Activated CD4-positive, alpha-beta memory T cell treated with anti-CD3 and anti-CD28 coated beads for 36 hours (primary cell): ENCODE measurements at regions of chr14 and their contacts with region 1.

Region 1: GRCh38 chr14:68663385-68664076 is 129.3 kb downstream of the ZFP36L1 start:
- DNase-seq: peak; percentile 72
- H3K4me3 Mint-ChIP-seq: peak overlapping the region; percentile 24
- H3K27ac Mint-ChIP-seq: peak overlapping the region; percentile 71
- H3K4me1 Mint-ChIP-seq: peaks cover 47% of the 10 kb centered on the region
- H3K27me3 Mint-ChIP-seq: no peaks in the 10 kb centered on the region

Region 2: GRCh38 chr14:68248481-68249255 is 414.9 kb before region 1 on chr14:
- CTCF ChIA-PET with region 1: interaction called, 3 read pairs
- POLR2A ChIA-PET with region 1: no interaction called
- intact Hi-C with region 1: loop called (anchors 5 kb)
- DNase-seq: no peak
- H3K4me3 Mint-ChIP-seq: no peak overlapping the region
- H3K27ac Mint-ChIP-seq: no peak overlapping the region
- H3K4me1 Mint-ChIP-seq: peaks cover 36% of the 10 kb centered on the region
- H3K27me3 Mint-ChIP-seq: no peaks in the 10 kb centered on the region

Region 3: DNA sequence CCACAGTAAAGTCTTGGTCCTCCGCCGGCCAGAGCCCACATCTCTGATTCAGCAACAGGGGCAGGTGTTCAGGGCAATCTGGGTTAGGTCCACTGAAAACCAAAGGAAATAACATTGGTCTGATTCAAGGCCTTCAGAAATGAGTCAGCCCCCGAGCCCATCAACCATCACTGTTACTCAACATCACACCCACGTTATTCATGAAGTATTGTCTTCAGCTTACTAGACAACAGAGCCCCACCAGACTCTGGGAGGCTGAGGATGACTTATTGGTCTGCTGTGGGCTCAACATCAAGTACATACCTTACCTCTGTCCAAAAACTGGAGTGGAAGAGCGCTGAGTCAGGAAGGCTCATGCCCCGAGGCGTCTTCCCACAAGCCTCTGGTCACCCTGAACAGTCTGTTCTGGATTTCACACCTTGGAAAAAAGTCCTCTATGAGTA is 31.8 kb after region 1 on chr14:
- CTCF ChIA-PET with region 1: no interaction called
- POLR2A ChIA-PET with region 1: interaction called, 14 read pairs
- intact Hi-C with region 1: loop called (anchors 5 kb)
- DNase-seq: peak; percentile 72
- H3K4me3 Mint-ChIP-seq: no peak overlapping the region
- H3K27ac Mint-ChIP-seq: peak overlapping the region; percentile 55
- H3K4me1 Mint-ChIP-seq: peaks cover 17% of the 10 kb centered on the region
- H3K27me3 Mint-ChIP-seq: no peaks in the 10 kb centered on the region

Region 4: DNA sequence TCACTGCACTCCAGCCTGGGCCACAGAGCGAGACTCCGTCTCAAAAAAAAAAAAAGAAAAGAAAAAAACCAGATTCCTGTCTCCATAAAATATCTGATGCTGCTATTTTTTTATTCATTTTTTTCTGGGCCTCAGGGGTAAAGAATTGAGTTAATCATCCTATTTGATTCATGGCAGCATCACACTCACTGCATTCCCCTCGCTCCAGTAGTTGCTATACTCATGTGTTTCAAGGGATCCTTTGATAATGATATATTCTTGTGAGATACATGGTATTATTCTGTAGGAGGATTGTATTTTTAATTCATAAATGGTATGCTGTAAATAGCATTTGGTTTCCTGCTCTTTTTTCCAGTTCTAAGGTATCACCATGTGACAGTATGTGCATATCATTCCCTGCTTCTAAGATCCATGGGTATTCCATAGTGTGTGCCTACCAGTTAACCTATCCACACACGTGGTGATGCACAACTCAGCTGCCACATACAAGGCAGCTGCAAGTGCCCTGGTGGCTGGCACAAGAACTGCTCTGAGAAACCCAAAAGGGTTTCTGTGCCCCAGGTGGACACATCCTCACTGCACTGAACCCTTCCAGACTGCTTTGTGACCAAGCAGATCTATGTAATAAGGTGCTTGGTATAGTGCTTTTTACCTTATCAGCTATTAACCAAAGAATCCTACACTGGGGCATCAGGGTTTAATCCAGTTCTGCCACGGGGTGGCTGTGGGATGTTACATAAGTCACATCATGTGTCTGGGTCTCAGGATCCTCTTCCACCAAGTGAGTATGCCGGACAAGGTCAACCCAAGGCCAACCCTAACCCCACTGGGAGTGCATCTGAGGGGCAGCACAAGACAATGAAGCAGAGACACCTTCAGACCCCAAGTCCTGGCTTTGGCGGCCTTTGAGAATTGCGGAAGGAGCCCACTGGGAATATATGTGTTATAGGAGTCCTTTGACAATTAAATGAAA is 54.8 kb after region 1 on chr14:
- CTCF ChIA-PET with region 1: interaction called, 3 read pairs
- POLR2A ChIA-PET with region 1: interaction called, 10 read pairs
- intact Hi-C with region 1: no loop called
- DNase-seq: peak; percentile 46
- H3K4me3 Mint-ChIP-seq: no peak overlapping the region
- H3K27ac Mint-ChIP-seq: no peak overlapping the region
- H3K4me1 Mint-ChIP-seq: peaks cover 40% of the 10 kb centered on the region
- H3K27me3 Mint-ChIP-seq: no peaks in the 10 kb centered on the region

Region 5: GRCh38 chr14:68734231-68734775 is 70.8 kb after region 1 on chr14:
- CTCF ChIA-PET with region 1: no interaction called
- POLR2A ChIA-PET with region 1: interaction called, 12 read pairs
- intact Hi-C with region 1: loop called (anchors 1 kb)
- DNase-seq: peak; percentile 68
- H3K4me3 Mint-ChIP-seq: peak overlapping the region; percentile 28
- H3K27ac Mint-ChIP-seq: peak overlapping the region; percentile 86
- H3K4me1 Mint-ChIP-seq: peaks cover 35% of the 10 kb centered on the region
- H3K27me3 Mint-ChIP-seq: no peaks in the 10 kb centered on the region